Activated T-helper 2 cell treated with anti-CD3 and anti-CD28 coated beads, Interferon-gamma antibody, Interleukin-2, Interleukin-4, amounts not matched to agents 10 μg/mL and 5 μg/mL and 100 μg/mL, durations not matched to agents 14 hours and 24 hours and 36 hours (primary cell): ENCODE measurements at regions of chr1 and their contacts with region 1.

Region 1: DNA sequence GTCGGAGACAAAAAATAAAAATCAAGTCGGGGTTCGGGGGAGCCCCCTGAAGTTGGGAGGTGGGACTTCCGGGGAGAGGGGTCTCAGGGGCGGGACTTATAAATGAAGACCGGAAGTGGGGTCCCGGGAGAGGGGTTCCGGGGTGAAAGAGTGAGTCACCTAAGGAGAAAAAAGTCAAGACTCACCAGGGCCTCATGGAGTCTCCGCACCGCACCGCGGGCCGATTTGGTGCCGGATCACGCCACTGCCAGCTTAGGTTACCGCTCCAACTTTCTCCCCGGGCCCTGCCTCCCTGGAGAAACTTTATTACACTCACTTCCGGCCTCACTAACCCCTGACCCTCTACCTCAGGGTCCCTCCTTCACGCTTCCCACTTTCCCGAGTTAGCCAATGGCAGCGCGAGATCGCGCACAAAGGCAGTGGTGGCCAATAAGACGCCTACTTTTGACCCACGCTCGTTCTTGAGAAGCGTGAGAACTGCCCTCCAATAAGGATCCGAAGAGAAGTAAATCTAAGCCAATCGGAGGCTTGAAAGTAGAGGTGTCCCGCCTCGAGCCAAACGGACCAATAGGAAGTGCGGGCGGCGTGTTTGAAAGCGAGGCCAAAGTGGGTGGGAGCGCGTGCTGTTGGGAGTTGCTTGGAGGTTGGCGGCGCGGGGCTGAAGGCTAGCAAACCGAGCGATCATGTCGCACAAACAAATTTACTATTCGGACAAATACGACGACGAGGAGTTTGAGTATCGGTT is at the start of gene CKS1B:
- DNase-seq: peak; percentile 97
- H3K4me3 Mint-ChIP-seq: no peak within 1 kb of the TSS
- H3K27ac Mint-ChIP-seq: no peak within 1 kb of the TSS
- H3K4me1 Mint-ChIP-seq: peaks cover 32% of the 10 kb centered on the region
- H3K27me3 Mint-ChIP-seq: no peaks in the 10 kb centered on the region
- total RNA-seq, gene CKS1B: 169 and 178 TPM in 2 replicates

Region 2: DNA sequence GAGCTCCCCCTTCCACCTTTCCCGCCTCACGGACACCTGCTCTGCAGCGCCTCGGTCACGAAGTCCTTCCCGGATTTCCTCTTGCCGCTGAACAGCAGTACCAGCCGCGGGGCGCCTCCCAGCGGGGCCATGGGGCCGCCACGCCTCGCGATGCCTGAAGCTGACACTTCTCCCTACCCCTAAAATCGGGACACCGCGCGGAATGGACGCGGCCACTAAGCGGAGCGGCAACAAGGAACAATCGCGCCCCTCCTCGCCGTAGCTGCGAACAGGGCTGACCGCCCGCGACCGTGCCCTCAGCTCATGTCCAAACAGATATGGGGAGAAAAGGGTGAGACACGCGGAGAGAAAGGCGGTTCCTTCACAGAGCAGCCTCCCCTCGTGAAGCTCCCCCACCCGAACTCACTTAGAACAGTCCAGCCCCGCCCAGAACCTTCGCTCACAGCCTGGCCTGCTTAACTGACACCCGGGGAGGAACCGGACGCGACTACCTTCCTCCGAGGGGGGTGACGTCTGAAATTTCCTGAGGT is 37.6 kb before region 1 on chr1 and contains the start of gene PMVK:
- intact Hi-C with region 1: loop called (anchors 1 kb)
- DNase-seq: peak; percentile 94
- H3K4me3 Mint-ChIP-seq: peak within 1 kb of the TSS; percentile 93
- H3K27ac Mint-ChIP-seq: peak within 1 kb of the TSS; percentile 95
- H3K4me1 Mint-ChIP-seq: peaks cover 45% of the 10 kb centered on the region
- H3K27me3 Mint-ChIP-seq: no peaks in the 10 kb centered on the region
- total RNA-seq, gene PMVK: 44.7 and 44.8 TPM in 2 replicates

Region 3: GRCh38 chr1:154961497-154962262 is 12.6 kb before region 1 on chr1 and contains the start of gene PYGO2:
- intact Hi-C with region 1: loop called (anchors 1 kb)
- DNase-seq: peak; percentile 82
- H3K4me3 Mint-ChIP-seq: peak within 1 kb of the TSS; percentile 94
- H3K27ac Mint-ChIP-seq: peak within 1 kb of the TSS; percentile 84
- H3K4me1 Mint-ChIP-seq: peaks cover 22% of the 10 kb centered on the region
- H3K27me3 Mint-ChIP-seq: no peaks in the 10 kb centered on the region
- total RNA-seq, gene PYGO2: 30.4 and 30.6 TPM in 2 replicates

Region 4: DNA sequence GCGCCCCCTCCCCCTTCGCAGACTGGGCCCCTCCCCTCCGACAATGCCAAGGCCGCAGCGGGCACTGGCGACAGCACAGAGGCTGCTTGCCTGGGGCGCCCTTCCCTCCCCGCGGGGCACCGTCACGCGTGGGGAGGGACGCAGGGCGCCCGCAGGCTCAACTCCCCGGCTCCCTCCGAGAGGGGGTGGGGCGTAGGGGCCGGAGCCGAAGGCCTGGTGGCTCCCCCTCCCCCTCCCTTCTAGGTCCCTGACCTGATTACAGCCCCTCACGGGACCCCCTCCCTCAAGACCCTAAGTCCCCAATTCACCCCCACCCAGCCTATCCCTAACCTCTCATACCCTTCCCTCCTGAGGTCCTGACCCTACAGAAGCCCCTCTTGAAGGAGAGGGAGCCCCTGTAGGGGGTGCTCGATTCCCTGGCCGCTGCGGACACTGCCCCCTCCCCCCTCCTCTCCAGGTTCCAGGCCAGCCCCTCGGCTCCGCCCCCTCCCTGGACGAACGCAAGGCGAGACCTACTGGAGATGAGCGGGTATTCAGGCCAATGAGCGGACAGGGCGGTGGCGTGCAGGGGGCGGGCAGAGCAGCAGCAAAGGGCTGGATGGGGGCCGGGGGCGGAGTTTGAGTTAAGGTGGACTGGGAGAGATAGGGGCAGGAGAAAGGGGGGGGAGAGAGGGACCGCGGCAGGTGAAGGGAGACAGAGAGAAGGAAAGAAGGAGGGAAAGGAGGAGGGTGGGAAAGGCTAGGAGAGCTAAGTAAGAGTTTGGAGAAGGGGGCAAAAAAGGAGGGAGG is 27.6 kb after region 1 on chr1:
- intact Hi-C with region 1: loop called (anchors 1 kb)
- DNase-seq: peak; percentile 98
- H3K4me3 Mint-ChIP-seq: peak overlapping the region; percentile 97
- H3K27ac Mint-ChIP-seq: peak overlapping the region; percentile 97
- H3K4me1 Mint-ChIP-seq: peaks cover 47% of the 10 kb centered on the region
- H3K27me3 Mint-ChIP-seq: no peaks in the 10 kb centered on the region

Region 5: GRCh38 chr1:155008015-155008979 is 34.1 kb after region 1 on chr1:
- intact Hi-C with region 1: loop called (anchors 2 kb)
- DNase-seq: peak; percentile 63
- H3K4me3 Mint-ChIP-seq: peak overlapping the region; percentile 96
- H3K27ac Mint-ChIP-seq: peak overlapping the region; percentile 92
- H3K4me1 Mint-ChIP-seq: peaks cover 46% of the 10 kb centered on the region
- H3K27me3 Mint-ChIP-seq: no peaks in the 10 kb centered on the region

Region 6: GRCh38 chr1:155017041-155017945 is 43.1 kb after region 1 on chr1:
- intact Hi-C with region 1: loop called (anchors 1 kb)
- DNase-seq: peak; percentile 82
- H3K4me3 Mint-ChIP-seq: no peak overlapping the region
- H3K27ac Mint-ChIP-seq: peak overlapping the region; percentile 22
- H3K4me1 Mint-ChIP-seq: peaks cover 51% of the 10 kb centered on the region
- H3K27me3 Mint-ChIP-seq: no peaks in the 10 kb centered on the region